ENCODE measurements at regions of chr11 and their contacts with region 1.

Region 1: DNA sequence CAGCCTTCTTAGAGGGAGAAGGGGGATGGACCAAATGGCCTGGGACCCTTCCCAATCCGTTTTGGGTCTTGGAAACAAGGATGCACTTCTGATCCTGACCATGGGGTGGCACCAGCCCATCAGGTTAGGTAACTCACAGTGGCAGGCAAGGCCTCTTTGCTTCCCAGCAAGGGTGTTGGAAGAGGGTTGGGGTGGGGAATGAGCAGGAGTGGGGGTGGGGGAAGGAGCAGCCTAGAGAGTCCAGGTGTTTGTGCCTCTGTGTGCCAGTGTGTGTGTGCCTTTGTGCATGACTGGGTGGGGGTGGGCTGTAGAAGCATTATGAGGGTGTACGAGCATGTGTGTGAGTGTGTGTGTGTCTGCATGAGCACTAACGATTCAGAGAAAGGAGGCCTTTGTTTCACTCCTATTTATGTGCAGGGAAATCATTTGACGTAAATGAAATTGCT is 213.1 kb downstream of the INSC start:
- DNase-seq: no peak
- ATAC-seq: peak; percentile 71
- H3K4me3 ChIP-seq: no peak overlapping the region
- H3K27ac ChIP-seq: no peak overlapping the region
- H3K4me1 ChIP-seq: no peaks in the 10 kb centered on the region
- H3K27me3 ChIP-seq: peaks cover 0 to 2% of the 10 kb centered on the region in 2 experiments; a peak in 1 of 4 replicates
- CTCF ChIP-seq: peak; percentile 55 to 72 (median 69)
- EP300 ChIP-seq: no peak
- POLR2A ChIP-seq: no peak
- RAD21 ChIP-seq: peak; percentile 76

Region 2: GRCh38 chr11:15605094-15605493 is 277.3 kb after region 1 on chr11:
- CTCF ChIA-PET with region 1: no interaction called
- POLR2A ChIA-PET with region 1: no interaction called
- RAD21 ChIA-PET with region 1: no interaction called
- SMC1A ChIA-PET with region 1: no interaction called
- in situ Hi-C with region 1: no loop called
- intact Hi-C with region 1: no loop called
- DNase-seq: no peak
- ATAC-seq: no peak
- H3K4me3 ChIP-seq: no peak overlapping the region
- H3K27ac ChIP-seq: no peak overlapping the region
- H3K4me1 ChIP-seq: no peaks in the 10 kb centered on the region
- H3K27me3 ChIP-seq: no peaks in the 10 kb centered on the region; a peak in 1 of 4 replicates
- CTCF ChIP-seq: no peak
- EP300 ChIP-seq: no peak
- POLR2A ChIP-seq: no peak
- RAD21 ChIP-seq: no peak

Region 3: DNA sequence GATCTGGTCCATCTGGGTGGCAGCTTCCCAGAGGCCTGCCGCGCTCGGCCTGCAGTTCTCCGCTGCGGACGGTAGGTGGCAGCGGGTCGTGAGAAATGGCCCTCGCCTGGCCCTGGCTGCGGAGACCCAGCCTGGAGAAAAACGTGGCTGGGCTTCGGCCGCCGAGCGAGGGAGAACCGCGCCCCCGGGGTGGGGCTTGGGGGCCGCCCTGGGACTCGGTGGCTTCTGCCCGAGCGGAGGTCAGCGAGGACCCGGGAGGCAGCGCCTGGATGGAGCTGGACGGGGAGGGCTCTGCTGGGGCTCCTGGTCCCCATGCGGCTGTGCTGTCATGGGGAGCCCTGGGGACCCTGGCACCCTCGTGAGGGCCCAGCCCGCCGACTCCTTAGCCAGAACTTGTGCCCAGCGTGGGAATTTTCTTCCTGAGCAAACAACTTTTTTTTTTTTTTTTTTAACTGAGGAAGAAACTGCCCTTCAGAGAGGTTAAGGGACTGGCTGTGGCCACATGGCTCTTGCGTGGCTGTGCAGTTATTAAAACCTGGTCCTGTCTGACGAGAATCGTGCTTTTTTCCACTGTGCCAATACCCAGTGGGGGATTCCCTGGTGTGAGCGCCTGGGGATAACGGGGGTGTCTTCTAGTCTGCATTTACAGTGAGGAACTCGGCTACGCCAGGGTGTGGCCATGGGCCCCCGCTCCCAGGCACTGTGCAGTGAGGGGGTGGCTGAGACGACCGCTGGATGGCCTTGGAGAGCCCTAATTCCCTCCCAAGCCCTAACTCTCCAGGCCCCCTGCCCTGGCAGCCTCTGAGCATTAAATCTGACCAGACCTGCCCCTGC is 322.5 kb after region 1 on chr11:
- CTCF ChIA-PET with region 1: no interaction called
- POLR2A ChIA-PET with region 1: no interaction called
- RAD21 ChIA-PET with region 1: no interaction called
- SMC1A ChIA-PET with region 1: no interaction called
- in situ Hi-C with region 1: no loop called
- intact Hi-C with region 1: loop called (anchors 2 kb)
- DNase-seq: peak; percentile 12
- ATAC-seq: peak; percentile 98
- H3K4me3 ChIP-seq: no peak overlapping the region
- H3K27ac ChIP-seq: no peak overlapping the region
- H3K4me1 ChIP-seq: no peaks in the 10 kb centered on the region; the same call in 1 of the 2 replicates
- H3K27me3 ChIP-seq: peaks cover 3 to 4% of the 10 kb centered on the region in 2 experiments; a peak in 2 of 4 replicates
- CTCF ChIP-seq: peak; percentile 92 to 98 (median 94)
- EP300 ChIP-seq: peak; percentile 9 to 32; a peak in 1 of 4 replicates
- POLR2A ChIP-seq: no peak
- RAD21 ChIP-seq: peak; percentile 75

Region 4: GRCh38 chr11:15770798-15771414 is 443.1 kb after region 1 on chr11:
- CTCF ChIA-PET with region 1: no interaction called
- POLR2A ChIA-PET with region 1: no interaction called
- RAD21 ChIA-PET with region 1: no interaction called
- SMC1A ChIA-PET with region 1: no interaction called
- in situ Hi-C with region 1: no loop called
- intact Hi-C with region 1: loop called (anchors 10 kb)
- DNase-seq: no peak
- ATAC-seq: peak; percentile 86
- H3K4me3 ChIP-seq: no peak overlapping the region
- H3K27ac ChIP-seq: no peak overlapping the region
- H3K4me1 ChIP-seq: no peaks in the 10 kb centered on the region
- H3K27me3 ChIP-seq: no peaks in the 10 kb centered on the region; a peak in 1 of 4 replicates
- CTCF ChIP-seq: peak; percentile 52 to 68 (median 65)
- EP300 ChIP-seq: no peak
- POLR2A ChIP-seq: no peak
- RAD21 ChIP-seq: peak; percentile 52

Region 5: DNA sequence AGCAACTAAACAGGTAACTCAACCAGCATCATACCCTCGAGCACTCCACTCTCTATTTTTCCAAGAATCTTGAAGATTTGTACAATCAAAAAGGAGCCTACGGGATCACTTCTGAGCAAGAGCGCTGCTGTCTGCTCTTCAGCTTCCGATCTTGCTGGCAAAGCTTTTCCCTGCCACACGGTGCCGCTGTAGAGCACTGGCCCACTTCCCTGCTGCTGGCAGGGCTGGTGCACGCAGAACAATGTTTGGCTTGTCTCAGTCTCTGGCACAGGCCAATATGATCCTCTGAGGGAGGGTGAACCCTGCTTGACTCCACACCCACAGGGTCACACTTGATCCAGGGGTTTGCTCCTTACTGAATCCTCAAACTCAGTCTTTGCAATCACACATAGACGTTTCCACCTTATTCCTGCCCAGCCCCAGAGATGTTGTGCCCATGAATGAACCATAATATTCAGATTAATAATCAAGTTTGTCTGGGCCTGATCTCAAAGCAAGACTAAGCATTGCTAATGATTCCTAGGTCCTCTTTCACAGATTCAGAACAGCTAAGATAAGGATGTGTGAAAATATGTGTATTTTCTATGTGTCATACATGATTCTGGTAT is 492.0 kb after region 1 on chr11:
- CTCF ChIA-PET with region 1: no interaction called
- POLR2A ChIA-PET with region 1: no interaction called
- RAD21 ChIA-PET with region 1: no interaction called
- SMC1A ChIA-PET with region 1: interaction called, 3 read pairs
- in situ Hi-C with region 1: no loop called
- intact Hi-C with region 1: loop called (anchors 5 kb)
- DNase-seq: no peak
- ATAC-seq: peak; percentile 88
- H3K4me3 ChIP-seq: no peak overlapping the region
- H3K27ac ChIP-seq: no peak overlapping the region
- H3K4me1 ChIP-seq: no peaks in the 10 kb centered on the region
- H3K27me3 ChIP-seq: no peaks in the 10 kb centered on the region
- CTCF ChIP-seq: peak; percentile 72 to 91 (median 91)
- EP300 ChIP-seq: no peak
- POLR2A ChIP-seq: no peak
- RAD21 ChIP-seq: peak; percentile 60